ENCODE measurements at regions of chr12 and their contacts with region 1.

Region 1: GRCh38 chr12:109858764-109859163 is 21.6 kb downstream of the GLTP start:
- DNase-seq: no peak
- ATAC-seq: no peak
- H3K4me3 ChIP-seq: no peak overlapping the region
- H3K4me3 Mint-ChIP-seq: no peak overlapping the region
- H3K27ac ChIP-seq: no peak overlapping the region
- H3K27ac Mint-ChIP-seq: no peak overlapping the region
- H3K4me1 ChIP-seq: peaks cover 2% of the 10 kb centered on the region
- H3K4me1 Mint-ChIP-seq: peaks cover 11% of the 10 kb centered on the region
- H3K27me3 ChIP-seq: no peaks in the 10 kb centered on the region
- H3K27me3 Mint-ChIP-seq: no peaks in the 10 kb centered on the region
- CTCF ChIP-seq: no peak

Region 2: DNA sequence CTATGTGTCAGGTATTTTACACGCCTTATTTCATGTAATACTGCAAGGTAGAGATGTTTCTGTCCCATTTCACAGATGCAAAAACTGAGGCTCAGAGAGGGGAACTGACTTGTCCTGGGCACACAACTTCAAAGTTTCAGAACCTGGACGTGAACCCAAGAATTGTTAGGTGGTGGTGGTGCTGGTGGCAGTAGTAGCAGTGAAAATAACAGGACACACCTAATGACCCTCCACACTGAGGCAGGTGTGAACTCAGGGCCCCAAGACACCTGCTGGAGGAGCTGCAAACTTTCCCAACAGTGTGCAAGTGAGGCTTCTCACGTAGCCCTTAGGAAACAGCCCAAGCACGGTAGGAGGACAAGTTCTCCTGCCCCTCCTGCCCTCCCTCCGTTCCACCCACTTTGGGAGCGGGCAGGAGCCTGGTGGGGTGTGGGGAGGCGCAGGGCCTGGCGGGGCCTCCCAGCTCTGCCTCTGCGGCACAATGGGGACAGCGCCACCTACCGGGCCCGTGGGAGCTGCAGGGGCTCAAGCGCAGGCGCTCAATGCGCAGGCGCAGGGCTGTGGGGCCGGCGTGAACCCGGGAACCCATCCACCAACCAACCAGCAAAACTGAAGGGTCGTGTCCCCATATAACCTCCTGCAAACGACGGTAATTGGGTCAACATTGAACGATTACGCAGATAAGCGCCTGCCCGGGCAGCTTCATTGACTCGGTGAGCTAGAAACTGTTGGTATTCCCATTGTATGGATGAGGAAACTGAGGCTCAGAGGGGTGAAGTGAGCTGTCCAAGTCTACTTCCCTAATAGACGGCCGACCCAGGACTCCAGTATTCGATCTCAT is 13.6 kb before region 1 on chr12:
- CTCF ChIA-PET with region 1: interaction called, 35 read pairs
- POLR2A ChIA-PET with region 1: interaction called, 4 read pairs
- intact Hi-C with region 1: no loop called
- DNase-seq: peak; percentile 73 to 92 (median 89)
- ATAC-seq: peak; percentile 100
- H3K4me3 ChIP-seq: peak overlapping the region; percentile 19 to 36
- H3K4me3 Mint-ChIP-seq: no peak overlapping the region
- H3K27ac ChIP-seq: no peak overlapping the region
- H3K27ac Mint-ChIP-seq: no peak overlapping the region
- H3K4me1 ChIP-seq: peaks cover 9% of the 10 kb centered on the region
- H3K4me1 Mint-ChIP-seq: peaks cover 3% of the 10 kb centered on the region
- H3K27me3 ChIP-seq: no peaks in the 10 kb centered on the region
- H3K27me3 Mint-ChIP-seq: no peaks in the 10 kb centered on the region
- CTCF ChIP-seq: peak; percentile 98

Region 3: GRCh38 chr12:109927622-109928021 is 68.9 kb after region 1 on chr12:
- CTCF ChIA-PET with region 1: interaction called, 42 read pairs
- POLR2A ChIA-PET with region 1: no interaction called
- intact Hi-C with region 1: no loop called
- DNase-seq: peak in 7 of 9 experiments; percentile 7 to 62 (median 34)
- ATAC-seq: peak; percentile 64
- H3K4me3 ChIP-seq: no peak overlapping the region
- H3K4me3 Mint-ChIP-seq: no peak overlapping the region
- H3K27ac ChIP-seq: no peak overlapping the region
- H3K27ac Mint-ChIP-seq: peak overlapping the region; percentile 75
- H3K4me1 ChIP-seq: no peaks in the 10 kb centered on the region
- H3K4me1 Mint-ChIP-seq: peaks cover 2% of the 10 kb centered on the region
- H3K27me3 ChIP-seq: no peaks in the 10 kb centered on the region
- H3K27me3 Mint-ChIP-seq: no peaks in the 10 kb centered on the region
- CTCF ChIP-seq: peak; percentile 25

Region 4: DNA sequence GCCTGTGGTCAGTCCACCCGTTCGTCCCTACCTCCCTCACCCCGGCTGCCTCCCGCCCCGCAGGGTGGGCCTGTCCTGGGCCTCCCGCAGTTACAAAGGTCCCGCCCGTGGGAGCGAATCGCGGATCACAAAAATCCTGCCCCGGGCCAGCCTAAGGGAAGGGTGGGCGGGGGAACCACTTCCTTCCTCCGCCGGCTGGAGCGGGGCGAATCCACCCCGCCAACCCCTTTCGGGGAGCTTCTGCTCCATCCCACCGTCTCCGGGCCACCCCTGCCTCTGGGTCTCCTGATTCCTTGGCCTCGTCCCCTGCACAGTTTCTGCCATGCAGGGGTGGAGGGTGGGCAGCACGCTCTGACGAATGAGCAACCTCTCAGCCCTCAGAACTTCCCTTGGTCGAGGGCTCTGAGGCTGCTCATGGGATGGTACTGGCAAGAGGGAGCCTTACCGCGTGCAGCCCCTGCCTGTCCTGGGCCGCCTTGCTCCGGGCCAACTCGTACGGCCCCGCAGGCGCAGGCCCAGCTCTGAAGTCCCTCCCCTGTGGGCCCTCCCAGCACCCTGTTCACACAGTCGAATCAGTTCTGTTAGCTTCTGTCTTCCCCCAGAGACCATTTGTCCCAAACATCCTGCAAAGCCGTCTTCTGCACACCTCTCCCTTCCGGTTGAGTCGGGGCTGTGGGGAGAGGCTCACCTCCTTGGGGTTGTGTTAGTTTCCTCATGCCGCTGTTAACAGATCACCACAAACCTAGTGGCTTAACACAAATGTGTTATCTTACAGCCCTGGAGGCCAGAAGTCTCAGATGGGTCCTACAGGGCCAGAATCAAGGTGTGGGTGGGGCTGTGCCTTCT is 830.7 kb after region 1 on chr12:
- CTCF ChIA-PET with region 1: no interaction called
- POLR2A ChIA-PET with region 1: no interaction called
- intact Hi-C with region 1: loop called in 1 of 2 experiments (anchors 10 kb)
- DNase-seq: peak in 8 of 9 experiments; percentile 44 to 80 (median 61)
- ATAC-seq: peak; percentile 69
- H3K4me3 ChIP-seq: peak overlapping the region; percentile 74 to 81
- H3K4me3 Mint-ChIP-seq: peak overlapping the region; percentile 83
- H3K27ac ChIP-seq: peak overlapping the region; percentile 49 to 70
- H3K27ac Mint-ChIP-seq: peak overlapping the region; percentile 85
- H3K4me1 ChIP-seq: peaks cover 21% of the 10 kb centered on the region
- H3K4me1 Mint-ChIP-seq: peaks cover 35% of the 10 kb centered on the region
- H3K27me3 ChIP-seq: no peaks in the 10 kb centered on the region
- H3K27me3 Mint-ChIP-seq: no peaks in the 10 kb centered on the region
- CTCF ChIP-seq: no peak